Activated naive CD8-positive, alpha-beta T cell treated with anti-CD3 and anti-CD28 coated beads, Interleukin-2, amount 10 ng/mL, durations not matched to agents 7 days and 5 days (primary cell): ENCODE measurements at regions of chr9 and their contacts with region 1.

Region 1: DNA sequence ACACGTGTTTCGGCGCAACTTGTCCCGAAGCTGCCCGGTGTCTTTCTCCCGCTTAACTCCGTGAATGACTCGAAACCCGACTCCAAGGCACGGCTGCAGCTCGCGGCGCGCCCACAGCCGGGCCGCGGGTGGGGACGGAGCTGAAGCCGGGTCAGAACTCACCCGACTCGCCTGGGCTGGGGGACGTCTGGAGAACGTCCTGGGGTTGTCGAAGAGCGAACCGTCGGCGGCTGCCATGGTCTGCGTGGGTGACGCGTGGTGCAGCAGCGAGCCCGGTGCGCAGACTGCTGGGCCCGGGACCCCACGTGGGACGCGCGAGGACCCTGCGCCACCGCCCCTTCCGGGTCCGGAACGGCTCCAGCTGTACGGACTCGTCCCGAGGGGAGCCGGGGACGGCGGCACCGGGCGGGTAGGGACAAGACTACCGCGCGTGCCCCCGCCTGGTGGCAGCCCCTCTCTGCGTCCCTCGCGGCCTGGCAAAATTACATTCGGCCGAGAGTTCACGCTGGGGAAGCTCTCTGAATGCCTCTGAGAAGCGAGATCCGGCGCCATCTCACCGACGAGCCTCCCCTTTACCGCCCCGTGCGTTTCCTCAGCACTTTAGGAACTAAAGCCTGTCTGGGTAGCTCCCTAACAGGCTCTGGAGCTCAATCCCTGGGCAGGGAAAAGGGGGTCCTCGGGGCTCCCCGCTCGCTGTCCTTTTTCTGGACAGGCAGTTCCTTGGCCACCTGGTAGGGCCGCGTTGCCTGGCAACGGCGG is at the start of gene DDX31:
- DNase-seq: peak; percentile 89
- ATAC-seq: peak; percentile 90
- H3K4me3 Mint-ChIP-seq: peak within 1 kb of the TSS; percentile 92
- H3K27ac Mint-ChIP-seq: peak within 1 kb of the TSS; percentile 88
- H3K4me1 Mint-ChIP-seq: peaks cover 29% of the 10 kb centered on the region
- H3K27me3 Mint-ChIP-seq: no peaks in the 10 kb centered on the region
- total RNA-seq, gene DDX31: 13.8 to 14.9 TPM

Region 2: GRCh38 chr9:132627106-132627505 is 42.8 kb before region 1 on chr9:
- POLR2A ChIA-PET with region 1: no interaction called
- DNase-seq: no peak
- ATAC-seq: no peak
- H3K4me3 Mint-ChIP-seq: no peak overlapping the region
- H3K27ac Mint-ChIP-seq: no peak overlapping the region
- H3K4me1 Mint-ChIP-seq: no peaks in the 10 kb centered on the region
- H3K27me3 Mint-ChIP-seq: no peaks in the 10 kb centered on the region

Region 3: DNA sequence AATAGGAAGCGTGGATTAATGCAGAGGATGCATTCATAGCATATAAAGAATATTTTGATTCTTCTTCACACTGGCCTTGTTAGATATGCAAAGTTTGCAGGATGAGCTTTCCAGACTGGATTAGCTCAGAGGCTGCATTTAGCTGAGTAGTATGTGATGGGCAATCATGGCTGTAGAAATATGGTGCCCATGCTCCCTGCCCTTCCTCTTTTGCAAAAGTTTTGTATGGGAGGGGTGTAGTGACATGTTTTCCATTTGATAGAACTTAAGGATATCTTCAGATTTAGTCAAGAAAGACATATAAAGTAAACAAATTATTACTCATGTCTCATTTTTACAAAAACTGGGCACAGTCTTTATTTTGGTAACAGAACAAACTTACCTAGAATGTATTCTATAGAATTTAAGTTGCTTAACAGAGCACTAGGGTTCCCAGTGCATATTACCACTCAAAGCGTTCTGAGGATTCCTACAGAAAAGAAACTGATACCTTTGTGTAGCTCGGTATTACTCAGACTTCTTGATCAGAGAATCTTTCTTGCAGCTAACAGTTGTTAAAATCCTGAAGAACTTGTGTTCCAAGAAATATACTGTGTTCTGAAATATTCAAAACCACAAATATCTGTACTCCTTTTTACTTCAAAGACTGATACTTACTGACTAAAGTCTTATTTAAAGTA is 10.2 kb after region 1 on chr9:
- POLR2A ChIA-PET with region 1: interaction called, 10 read pairs
- DNase-seq: no peak
- ATAC-seq: peak; percentile 67
- H3K4me3 Mint-ChIP-seq: peak overlapping the region; percentile 47
- H3K27ac Mint-ChIP-seq: peak overlapping the region; percentile 74
- H3K4me1 Mint-ChIP-seq: peaks cover 19% of the 10 kb centered on the region
- H3K27me3 Mint-ChIP-seq: no peaks in the 10 kb centered on the region

Region 4: DNA sequence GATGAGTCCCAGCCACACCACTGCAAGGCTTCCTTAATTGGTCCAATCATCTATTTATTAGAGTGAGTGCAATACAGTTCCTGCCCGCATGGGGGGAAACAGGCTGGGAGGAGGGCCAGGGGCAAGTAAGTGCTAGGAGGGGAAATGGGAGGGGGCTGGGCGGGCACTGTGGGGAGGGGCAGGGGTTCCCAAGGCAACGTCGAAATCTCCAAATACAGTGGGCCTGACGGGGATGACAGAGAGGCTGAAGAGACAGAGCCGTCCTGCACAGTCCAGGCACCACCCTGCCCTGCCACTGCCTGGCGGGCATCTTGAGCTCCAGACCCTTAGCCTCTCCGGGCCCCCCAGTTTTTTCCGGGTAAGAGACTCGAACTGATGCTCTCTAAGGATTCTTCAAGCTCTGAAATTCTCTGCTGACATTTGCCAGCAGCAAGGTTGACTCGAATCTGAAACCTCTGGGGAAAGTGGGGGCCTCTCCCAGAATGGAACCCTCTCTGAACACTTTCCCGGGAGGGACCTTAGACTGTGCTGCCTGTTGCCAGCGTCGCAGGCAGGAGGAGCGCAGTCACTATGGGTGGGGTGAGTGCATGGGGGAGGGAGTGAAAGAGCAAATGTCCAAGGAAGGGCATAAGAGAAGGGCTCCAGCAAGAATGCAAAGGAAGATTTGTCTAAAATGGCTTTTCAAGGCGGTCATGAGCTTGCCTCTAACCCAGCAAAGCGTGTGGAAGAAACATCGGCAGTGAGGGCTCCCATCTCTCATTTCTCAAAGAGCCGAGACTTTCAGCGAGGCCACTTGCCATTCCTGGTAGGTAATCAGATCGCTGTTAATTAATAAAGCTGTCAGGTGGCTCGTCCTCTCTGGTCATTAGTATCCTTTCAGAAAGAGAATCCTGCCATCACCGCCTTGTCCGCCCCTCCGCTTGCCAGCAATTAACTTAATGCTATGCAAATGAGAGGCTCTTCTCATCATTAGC is 99.3 kb after region 1 on chr9:
- POLR2A ChIA-PET with region 1: interaction called, 35 read pairs
- DNase-seq: peak; percentile 65
- ATAC-seq: peak; percentile 62
- H3K4me3 Mint-ChIP-seq: peak overlapping the region; percentile 99
- H3K27ac Mint-ChIP-seq: peak overlapping the region; percentile 99
- H3K4me1 Mint-ChIP-seq: peaks cover 15% of the 10 kb centered on the region
- H3K27me3 Mint-ChIP-seq: peaks cover 4% of the 10 kb centered on the region